Calu3 (cell line): ENCODE measurements at regions of chr11 and their contacts with region 1.

Region 1: GRCh38 chr11:57667736-57668435 is at the start of gene ZDHHC5:
- DNase-seq: peak; percentile 99
- H3K4me3 Mint-ChIP-seq: peak within 1 kb of the TSS; percentile 94
- H3K27ac Mint-ChIP-seq: peak within 1 kb of the TSS; percentile 100
- H3K4me1 Mint-ChIP-seq: peaks cover 26% of the 10 kb centered on the region
- H3K27me3 Mint-ChIP-seq: no peaks in the 10 kb centered on the region
- CTCF ChIP-seq: peak; percentile 55
- total RNA-seq, gene ZDHHC5: 85.9 and 95.3 TPM in 2 replicates

Region 2: GRCh38 chr11:57657194-57658022 is 10.5 kb before region 1 on chr11 and contains the start of gene CLP1:
- CTCF ChIA-PET with region 1: no interaction called
- intact Hi-C with region 1: loop called (anchors 1 kb)
- DNase-seq: peak; percentile 99
- H3K4me3 Mint-ChIP-seq: peak within 1 kb of the TSS; percentile 93
- H3K27ac Mint-ChIP-seq: peak within 1 kb of the TSS; percentile 80
- H3K4me1 Mint-ChIP-seq: peaks cover 8% of the 10 kb centered on the region
- H3K27me3 Mint-ChIP-seq: no peaks in the 10 kb centered on the region
- CTCF ChIP-seq: no peak
- total RNA-seq, gene CLP1: 15.2 and 18.6 TPM in 2 replicates

Region 3: DNA sequence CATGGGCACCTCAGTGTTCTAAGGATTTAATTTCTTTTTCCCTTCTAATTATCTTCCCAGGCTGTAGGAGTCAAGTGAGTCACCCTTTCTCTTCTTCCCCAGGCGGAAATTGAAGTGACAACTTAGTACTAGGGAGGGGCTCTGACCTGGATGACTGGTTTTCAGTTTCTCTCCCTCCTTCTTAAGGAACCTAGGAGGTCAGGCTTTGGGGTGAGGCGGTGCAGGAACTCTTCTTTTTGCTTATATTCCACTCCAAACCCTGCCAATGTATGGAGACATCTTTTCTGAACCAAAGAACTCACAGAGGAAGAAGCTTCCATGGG is 12.6 kb after region 1 on chr11:
- CTCF ChIA-PET with region 1: no interaction called
- intact Hi-C with region 1: no loop called
- DNase-seq: peak; percentile 31
- H3K4me3 Mint-ChIP-seq: no peak overlapping the region
- H3K27ac Mint-ChIP-seq: peak overlapping the region; percentile 37
- H3K4me1 Mint-ChIP-seq: peaks cover 29% of the 10 kb centered on the region
- H3K27me3 Mint-ChIP-seq: no peaks in the 10 kb centered on the region
- CTCF ChIP-seq: no peak

Region 4: DNA sequence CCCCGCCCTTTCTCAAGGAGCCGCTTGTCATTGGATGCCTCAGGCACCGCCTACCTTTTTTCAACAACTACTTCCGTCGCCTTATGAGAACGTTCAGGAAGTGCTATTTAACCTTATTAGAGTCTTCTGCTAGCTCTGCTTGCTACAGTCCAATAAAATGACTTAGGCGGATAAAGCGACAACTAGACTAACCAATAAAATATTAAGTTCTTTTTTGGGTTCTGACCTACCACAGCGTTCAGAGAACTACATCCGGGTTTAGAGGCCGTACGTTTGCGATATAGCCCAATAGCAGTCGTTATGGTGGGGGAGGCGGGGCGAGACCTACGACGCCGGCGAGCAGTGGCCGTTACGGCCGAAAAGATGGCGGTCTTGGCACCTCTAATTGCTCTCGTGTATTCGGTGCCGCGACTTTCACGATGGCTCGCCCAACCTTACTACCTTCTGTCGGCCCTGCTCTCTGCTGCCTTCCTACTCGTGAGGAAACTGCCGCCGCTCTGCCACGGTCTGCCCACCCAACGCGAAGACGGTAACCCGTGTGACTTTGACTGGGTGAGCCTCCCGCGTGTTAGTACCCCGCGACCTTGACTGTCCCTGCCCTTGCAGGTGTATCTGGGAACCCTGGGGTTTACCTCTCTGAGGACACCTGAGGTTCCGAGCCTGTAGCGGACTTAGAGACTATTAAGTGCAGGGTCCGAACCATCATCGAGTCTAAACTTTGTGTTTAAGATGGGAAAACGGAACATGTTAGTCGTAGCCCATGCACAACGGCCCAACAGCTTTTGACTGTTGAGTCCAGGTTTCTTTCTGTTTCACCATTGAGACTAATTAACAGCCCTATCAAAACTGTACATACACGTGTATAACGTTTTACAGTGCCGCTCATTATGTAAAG is 44.6 kb after region 1 on chr11 and contains the start of gene TMX2:
- CTCF ChIA-PET with region 1: no interaction called
- intact Hi-C with region 1: loop called (anchors 5 kb)
- DNase-seq: peak; percentile 94
- H3K4me3 Mint-ChIP-seq: peak within 1 kb of the TSS; percentile 88
- H3K27ac Mint-ChIP-seq: peak within 1 kb of the TSS; percentile 88
- H3K4me1 Mint-ChIP-seq: peaks cover 26% of the 10 kb centered on the region
- H3K27me3 Mint-ChIP-seq: no peaks in the 10 kb centered on the region
- CTCF ChIP-seq: no peak
- total RNA-seq, gene TMX2: 146 and 152 TPM in 2 replicates

Region 5: GRCh38 chr11:57787920-57788702 is 120.2 kb after region 1 on chr11:
- CTCF ChIA-PET with region 1: no interaction called
- intact Hi-C with region 1: loop called (anchors 10 kb)
- DNase-seq: no peak
- H3K4me3 Mint-ChIP-seq: peak overlapping the region; percentile 4
- H3K27ac Mint-ChIP-seq: peak overlapping the region; percentile 45
- H3K4me1 Mint-ChIP-seq: peaks cover 77% of the 10 kb centered on the region
- H3K27me3 Mint-ChIP-seq: no peaks in the 10 kb centered on the region
- CTCF ChIP-seq: no peak